A549 (cell line): ENCODE measurements at regions of chr10 and their contacts with region 1.

Region 1: GRCh38 chr10:119445311-119445934 is 97.1 kb downstream of the RGS10 start:
- DNase-seq: peak; percentile 77 to 81
- ATAC-seq: peak; percentile 81 to 94
- H3K4me3 ChIP-seq: no peak overlapping the region
- H3K27ac ChIP-seq: no peak overlapping the region
- H3K4me1 ChIP-seq: peaks cover 8% of the 10 kb centered on the region
- CTCF ChIP-seq: peak; percentile 91
- EP300 ChIP-seq: no peak
- POLR2A ChIP-seq: no peak
- RAD21 ChIP-seq: peak; percentile 88 to 90

Region 2: DNA sequence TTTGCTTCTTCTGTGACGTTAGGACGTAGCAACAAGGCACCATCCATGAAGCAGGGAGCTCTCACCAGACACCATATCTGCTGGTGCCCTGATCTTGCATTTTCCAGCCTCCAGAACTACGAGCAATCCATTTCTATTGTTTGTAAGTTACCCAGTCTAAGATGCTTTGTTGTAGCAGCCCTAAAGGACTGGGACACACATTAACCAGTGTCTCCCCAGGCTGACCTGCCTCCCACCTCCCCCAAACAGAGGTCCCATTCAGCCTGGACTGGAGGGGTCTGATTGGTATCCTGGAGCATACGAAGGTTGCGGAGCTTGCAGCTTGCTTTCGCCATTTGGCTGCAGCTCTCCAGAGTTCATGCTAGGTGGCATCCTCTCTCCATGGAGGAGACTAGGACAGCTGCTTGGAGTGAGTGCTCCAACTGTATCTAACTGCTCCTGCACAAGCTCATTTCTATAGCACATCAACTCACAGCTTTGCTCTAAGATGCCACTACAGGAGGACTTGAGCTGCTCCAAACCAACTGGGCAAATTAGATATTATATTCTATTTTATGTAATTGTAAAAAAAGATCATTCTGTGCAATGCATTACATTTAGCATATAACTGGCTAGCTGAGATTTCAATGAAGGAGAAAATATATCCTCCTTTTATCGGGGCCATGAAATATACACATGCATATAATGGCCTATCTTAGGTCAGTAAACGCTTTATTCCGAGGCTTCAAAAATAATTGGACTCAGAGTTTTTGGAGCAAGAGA is 246.0 kb before region 1 on chr10:
- CTCF ChIA-PET with region 1: interaction called, 186 read pairs
- POLR2A ChIA-PET with region 1: interaction called, 3 read pairs
- DNase-seq: peak; percentile 68 to 87
- ATAC-seq: peak; percentile 96 to 98
- H3K4me3 ChIP-seq: no peak overlapping the region
- H3K27ac ChIP-seq: no peak overlapping the region
- H3K4me1 ChIP-seq: no peaks in the 10 kb centered on the region; the same call in 2 of the 3 replicates
- CTCF ChIP-seq: peak; percentile 89
- EP300 ChIP-seq: no peak
- POLR2A ChIP-seq: no peak
- RAD21 ChIP-seq: peak; percentile 95 to 98

Region 3: GRCh38 chr10:119296703-119297102 is 148.7 kb before region 1 on chr10:
- CTCF ChIA-PET with region 1: interaction called, 10 read pairs
- POLR2A ChIA-PET with region 1: no interaction called
- DNase-seq: no peak
- ATAC-seq: no peak
- H3K4me3 ChIP-seq: no peak overlapping the region
- H3K27ac ChIP-seq: no peak overlapping the region
- H3K4me1 ChIP-seq: peaks cover 4% of the 10 kb centered on the region; the same call in 2 of the 3 replicates
- CTCF ChIP-seq: no peak
- EP300 ChIP-seq: no peak
- POLR2A ChIP-seq: no peak
- RAD21 ChIP-seq: no peak

Region 4: DNA sequence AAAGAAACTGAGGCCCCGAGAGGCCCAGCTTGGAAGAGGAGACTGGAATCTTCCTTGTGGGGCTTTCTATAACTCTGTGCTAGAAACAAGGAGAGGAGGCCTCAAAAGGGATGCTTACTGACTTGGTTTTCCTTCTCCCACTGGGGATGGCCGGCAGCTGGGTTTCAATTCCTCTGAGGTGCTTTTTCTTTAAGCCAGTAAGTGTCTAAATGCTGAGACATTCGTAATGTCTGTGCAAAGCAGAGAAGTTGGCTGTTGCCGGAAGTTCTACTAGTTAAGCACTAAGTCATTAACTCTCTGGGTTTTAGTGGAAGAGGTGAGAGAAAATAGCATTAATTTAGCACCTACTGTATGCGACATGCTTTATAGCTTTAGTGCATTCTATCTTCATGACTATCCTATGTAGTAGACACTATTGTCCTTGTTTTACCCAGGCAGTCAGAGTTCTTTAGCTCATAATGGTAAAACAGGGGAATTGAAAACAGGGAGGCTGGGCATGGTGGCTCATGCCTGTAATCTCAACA is 38.1 kb before region 1 on chr10:
- CTCF ChIA-PET with region 1: interaction called, 16 read pairs
- POLR2A ChIA-PET with region 1: no interaction called
- DNase-seq: no peak
- ATAC-seq: no peak
- H3K4me3 ChIP-seq: no peak overlapping the region
- H3K27ac ChIP-seq: no peak overlapping the region
- H3K4me1 ChIP-seq: peaks cover 2% of the 10 kb centered on the region
- CTCF ChIP-seq: no peak
- EP300 ChIP-seq: no peak
- POLR2A ChIP-seq: no peak
- RAD21 ChIP-seq: no peak

Region 5: DNA sequence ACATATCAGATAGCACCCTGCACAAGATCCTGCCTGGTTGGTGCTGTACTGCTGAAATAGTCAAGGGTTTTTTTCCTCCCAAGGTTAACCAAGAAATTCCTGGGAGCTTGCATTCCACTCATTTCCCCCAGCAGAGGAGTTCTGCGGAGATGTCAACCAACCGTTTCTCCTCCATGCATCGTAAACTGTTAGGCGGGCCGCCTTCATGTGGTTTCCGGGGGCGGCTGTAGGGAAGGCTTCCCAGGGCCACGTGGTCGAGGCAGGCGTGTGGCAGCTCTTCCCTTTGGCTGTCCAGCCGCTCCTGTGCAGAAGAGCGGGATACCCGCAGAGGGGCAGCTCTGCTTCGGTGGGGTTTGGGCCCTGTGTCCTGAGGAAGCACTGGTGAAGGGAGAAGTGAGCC is 16.6 kb before region 1 on chr10:
- CTCF ChIA-PET with region 1: interaction called, 102 read pairs
- POLR2A ChIA-PET with region 1: no interaction called
- DNase-seq: no peak
- ATAC-seq: no peak
- H3K4me3 ChIP-seq: no peak overlapping the region
- H3K27ac ChIP-seq: no peak overlapping the region
- H3K4me1 ChIP-seq: no peaks in the 10 kb centered on the region
- CTCF ChIP-seq: no peak
- EP300 ChIP-seq: no peak
- POLR2A ChIP-seq: no peak
- RAD21 ChIP-seq: no peak

Region 6: GRCh38 chr10:119468542-119469324 is 23.3 kb after region 1 on chr10:
- CTCF ChIA-PET with region 1: interaction called, 14 read pairs
- POLR2A ChIA-PET with region 1: no interaction called
- DNase-seq: no peak
- ATAC-seq: peak in 1 of 2 experiments; percentile 12; a peak in 1 of 6 replicates
- H3K4me3 ChIP-seq: no peak overlapping the region
- H3K27ac ChIP-seq: no peak overlapping the region
- H3K4me1 ChIP-seq: no peaks in the 10 kb centered on the region
- CTCF ChIP-seq: no peak
- EP300 ChIP-seq: no peak
- POLR2A ChIP-seq: no peak
- RAD21 ChIP-seq: no peak

Region 7: DNA sequence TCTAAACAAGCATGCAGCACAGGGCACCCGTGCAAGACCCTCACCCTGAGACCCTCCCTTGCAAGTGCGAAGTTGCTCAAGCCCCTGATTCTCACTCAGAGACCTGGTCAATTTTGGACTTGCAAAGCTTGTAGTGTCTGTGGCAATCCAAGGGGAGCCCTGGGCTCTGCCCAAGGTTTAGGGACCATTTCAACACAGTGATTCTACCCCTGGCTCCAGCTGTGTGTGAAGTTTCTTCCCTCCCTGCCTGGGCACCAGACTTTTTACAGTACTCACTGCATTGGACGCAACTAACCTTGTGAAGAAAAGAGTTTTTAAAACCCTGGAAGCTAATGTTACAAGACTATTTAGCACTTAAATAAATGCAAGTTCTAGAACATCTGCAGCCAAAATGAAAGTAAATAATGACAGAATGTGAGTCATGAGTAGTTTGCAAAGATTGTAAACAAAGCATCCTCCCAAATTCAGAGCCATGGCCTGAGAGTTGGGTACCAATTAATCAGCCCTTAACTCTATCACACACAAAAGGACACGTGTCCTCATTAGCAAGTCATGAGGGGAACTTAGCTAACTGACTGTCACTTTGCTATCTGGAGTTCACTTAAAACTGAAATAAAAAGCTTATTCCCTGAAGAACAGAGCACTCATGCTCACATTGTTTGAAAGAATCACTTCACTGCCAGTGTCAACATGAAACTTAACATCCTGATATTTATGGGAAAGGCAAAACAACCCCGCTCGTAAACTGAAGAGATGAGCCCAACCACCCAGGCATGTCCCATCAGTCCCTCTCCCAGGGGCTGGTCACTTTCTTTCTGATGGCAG is 49.0 kb after region 1 on chr10:
- CTCF ChIA-PET with region 1: interaction called, 18 read pairs
- POLR2A ChIA-PET with region 1: no interaction called
- DNase-seq: no peak
- ATAC-seq: no peak
- H3K4me3 ChIP-seq: no peak overlapping the region
- H3K27ac ChIP-seq: no peak overlapping the region
- H3K4me1 ChIP-seq: peaks cover 18% of the 10 kb centered on the region
- CTCF ChIP-seq: no peak
- EP300 ChIP-seq: no peak
- POLR2A ChIP-seq: no peak
- RAD21 ChIP-seq: no peak